CD4-positive, alpha-beta memory T cell (primary cell): ENCODE measurements at regions of chr6 and their contacts with region 1.

Region 1: GRCh38 chr6:143427109-143427817 is 23.2 kb downstream of the ADAT2 start:
- DNase-seq: peak; percentile 65 to 73 (median 70)
- H3K4me3 ChIP-seq: no peak overlapping the region
- H3K4me3 Mint-ChIP-seq: no peak overlapping the region
- H3K27ac ChIP-seq: no peak overlapping the region
- H3K27ac Mint-ChIP-seq: peak overlapping the region in 2 of 7 donors; percentile 15 to 81
- H3K4me1 ChIP-seq: no peaks in the 10 kb centered on the region
- H3K4me1 Mint-ChIP-seq: no peaks in the 10 kb centered on the region
- H3K27me3 ChIP-seq: no peaks in the 10 kb centered on the region
- H3K27me3 Mint-ChIP-seq: no peaks in the 10 kb centered on the region

Region 2: GRCh38 chr6:142566628-142567396 is 860.5 kb before region 1 on chr6:
- CTCF ChIA-PET with region 1: interaction called, 28 read pairs
- POLR2A ChIA-PET with region 1: no interaction called
- intact Hi-C with region 1: loop called (anchors 1 kb)
- DNase-seq: peak; percentile 47 to 49 (median 48)
- H3K4me3 ChIP-seq: no peak overlapping the region
- H3K4me3 Mint-ChIP-seq: peak overlapping the region in 2 of 8 donors; percentile 29 to 53
- H3K27ac ChIP-seq: no peak overlapping the region
- H3K27ac Mint-ChIP-seq: peak overlapping the region in 6 of 7 donors; percentile 24 to 64 (median 40)
- H3K4me1 ChIP-seq: peaks cover 52% of the 10 kb centered on the region
- H3K4me1 Mint-ChIP-seq: peaks cover 34 to 59% (median 51%) of the 10 kb centered on the region in 4 donors
- H3K27me3 ChIP-seq: no peaks in the 10 kb centered on the region
- H3K27me3 Mint-ChIP-seq: no peaks in the 10 kb centered on the region

Region 3: GRCh38 chr6:142746524-142746923 is 680.7 kb before region 1 on chr6:
- CTCF ChIA-PET with region 1: no interaction called
- POLR2A ChIA-PET with region 1: no interaction called
- intact Hi-C with region 1: loop called (anchors 5 kb)
- DNase-seq: peak in 4 of 5 donors; percentile 29 to 42 (median 34)
- H3K4me3 ChIP-seq: no peak overlapping the region
- H3K4me3 Mint-ChIP-seq: no peak overlapping the region
- H3K27ac ChIP-seq: no peak overlapping the region
- H3K27ac Mint-ChIP-seq: peak overlapping the region in 1 of 7 donors; percentile 16
- H3K4me1 ChIP-seq: peaks cover 5% of the 10 kb centered on the region
- H3K4me1 Mint-ChIP-seq: peaks cover 3 to 11% (median 9%) of the 10 kb centered on the region in 4 donors
- H3K27me3 ChIP-seq: no peaks in the 10 kb centered on the region
- H3K27me3 Mint-ChIP-seq: no peaks in the 10 kb centered on the region

Region 4: GRCh38 chr6:143060354-143060805 is 366.9 kb before region 1 on chr6:
- CTCF ChIA-PET with region 1: no interaction called
- POLR2A ChIA-PET with region 1: no interaction called
- intact Hi-C with region 1: loop called (anchors 10 kb)
- DNase-seq: peak; percentile 76 to 88 (median 78)
- H3K4me3 ChIP-seq: peak overlapping the region; percentile 39 to 72
- H3K4me3 Mint-ChIP-seq: peak overlapping the region; percentile 92 to 97 (median 96)
- H3K27ac ChIP-seq: peak overlapping the region; percentile 70
- H3K27ac Mint-ChIP-seq: peak overlapping the region; percentile 92 to 99 (median 97)
- H3K4me1 ChIP-seq: peaks cover 17% of the 10 kb centered on the region
- H3K4me1 Mint-ChIP-seq: peaks cover 18 to 28% (median 23%) of the 10 kb centered on the region in 4 donors
- H3K27me3 ChIP-seq: no peaks in the 10 kb centered on the region
- H3K27me3 Mint-ChIP-seq: peaks cover 0 to 2% of the 10 kb centered on the region in 2 donors